SK-N-SH (cell line): ENCODE measurements at regions of chr6 and their contacts with region 1.

Region 1: GRCh38 chr6:38871741-38872568 is 156.8 kb downstream of the DNAH8 start:
- DNase-seq: peak; percentile 56
- H3K4me3 ChIP-seq: no peak overlapping the region
- H3K27ac ChIP-seq: no peak overlapping the region
- H3K4me1 ChIP-seq: no peaks in the 10 kb centered on the region; a peak in 1 of 4 replicates
- H3K27me3 ChIP-seq: no peaks in the 10 kb centered on the region
- CTCF ChIP-seq: peak; percentile 95
- EP300 ChIP-seq: no peak
- RAD21 ChIP-seq: peak; percentile 92

Region 2: DNA sequence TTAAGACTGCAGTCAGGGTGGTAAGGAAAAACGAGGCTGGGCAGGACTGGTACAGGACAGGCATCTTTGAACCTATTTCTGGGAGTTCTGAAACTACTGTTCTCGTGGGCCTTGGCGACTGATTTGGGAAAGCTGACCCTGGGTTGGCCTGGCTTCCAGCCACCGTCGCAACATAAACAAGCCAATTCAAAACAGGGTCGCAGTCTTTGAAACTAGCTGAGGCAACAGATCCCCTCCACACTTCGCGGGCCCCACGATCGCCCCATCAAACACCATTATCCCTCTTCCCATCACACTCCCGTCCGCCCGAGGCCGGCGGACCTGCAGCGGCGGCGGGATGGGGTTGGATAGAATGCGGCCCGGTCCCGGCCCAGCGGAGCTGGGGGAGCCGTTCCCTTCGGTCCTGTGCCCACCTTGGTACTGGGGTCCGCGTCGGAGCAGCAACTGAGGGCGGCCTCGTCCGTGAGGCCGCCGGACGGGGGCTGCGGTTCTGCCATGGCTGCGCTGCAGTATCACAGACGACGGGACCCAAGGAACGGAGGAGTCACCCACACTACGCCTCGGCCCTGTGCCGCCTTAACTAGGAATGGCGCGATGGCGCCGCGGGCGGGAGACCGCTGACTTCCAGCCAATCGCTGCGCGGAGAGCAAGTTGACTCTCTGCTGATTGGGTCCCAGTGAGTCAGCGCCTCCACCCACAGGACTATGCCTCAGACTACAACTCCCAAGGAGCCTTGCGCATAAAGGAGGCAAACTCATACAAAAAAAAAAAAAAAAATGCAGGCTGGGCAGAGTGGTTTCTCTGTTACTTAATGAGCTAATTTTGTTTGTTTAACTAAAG is 169.2 kb before region 1 on chr6 and contains the start of gene GLO1:
- CTCF ChIA-PET with region 1: no interaction called
- POLR2A ChIA-PET with region 1: no interaction called
- DNase-seq: peak; percentile 97
- H3K4me3 ChIP-seq: peak within 1 kb of the TSS; percentile 68 to 90
- H3K27ac ChIP-seq: peak within 1 kb of the TSS; percentile 70 to 86
- H3K4me1 ChIP-seq: peaks cover 0 to 2% of the 10 kb centered on the region in 2 experiments; a peak in 1 of 4 replicates
- H3K27me3 ChIP-seq: no peaks in the 10 kb centered on the region
- CTCF ChIP-seq: no peak
- EP300 ChIP-seq: no peak
- RAD21 ChIP-seq: no peak
- polyA plus RNA-seq, gene GLO1: 47.1 and 56.6 TPM in 2 replicates

Region 3: DNA sequence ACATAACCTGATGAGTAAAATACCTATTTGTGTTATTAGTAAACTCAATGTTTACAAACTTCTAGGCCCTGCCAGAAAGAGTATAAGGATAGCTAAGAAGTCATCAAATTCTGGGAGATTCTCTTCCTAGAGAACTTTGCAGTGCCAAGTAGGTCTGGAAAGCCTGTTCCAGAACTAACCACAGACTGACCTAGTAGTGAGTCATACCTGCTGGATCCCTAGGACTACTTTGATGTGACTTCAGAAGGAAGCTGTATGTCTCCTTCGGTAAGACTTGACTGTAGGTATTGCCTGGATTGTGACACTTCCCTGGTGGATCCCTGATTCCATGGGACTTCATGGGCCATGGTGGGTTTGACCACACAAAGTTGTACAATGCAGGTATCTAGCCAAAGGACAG is 25.1 kb before region 1 on chr6:
- CTCF ChIA-PET with region 1: interaction called, 12 read pairs
- POLR2A ChIA-PET with region 1: no interaction called
- DNase-seq: no peak
- H3K4me3 ChIP-seq: no peak overlapping the region
- H3K27ac ChIP-seq: no peak overlapping the region
- H3K4me1 ChIP-seq: no peaks in the 10 kb centered on the region
- H3K27me3 ChIP-seq: no peaks in the 10 kb centered on the region
- CTCF ChIP-seq: no peak
- EP300 ChIP-seq: no peak
- RAD21 ChIP-seq: no peak

Region 4: GRCh38 chr6:38909015-38909730 is 37.2 kb after region 1 on chr6:
- CTCF ChIA-PET with region 1: interaction called, 12 read pairs
- POLR2A ChIA-PET with region 1: no interaction called
- DNase-seq: no peak
- H3K4me3 ChIP-seq: no peak overlapping the region
- H3K27ac ChIP-seq: no peak overlapping the region
- H3K4me1 ChIP-seq: no peaks in the 10 kb centered on the region
- H3K27me3 ChIP-seq: no peaks in the 10 kb centered on the region
- CTCF ChIP-seq: no peak
- EP300 ChIP-seq: no peak
- RAD21 ChIP-seq: no peak

Region 5: GRCh38 chr6:38933432-38933831 is 61.5 kb after region 1 on chr6:
- CTCF ChIA-PET with region 1: interaction called, 29 read pairs
- POLR2A ChIA-PET with region 1: no interaction called
- DNase-seq: peak; percentile 27
- H3K4me3 ChIP-seq: no peak overlapping the region
- H3K27ac ChIP-seq: no peak overlapping the region
- H3K4me1 ChIP-seq: peaks cover 0 to 5% of the 10 kb centered on the region in 2 experiments; a peak in 2 of 4 replicates
- H3K27me3 ChIP-seq: no peaks in the 10 kb centered on the region; the same call in 1 of the 2 replicates
- CTCF ChIP-seq: peak; percentile 47
- EP300 ChIP-seq: no peak
- RAD21 ChIP-seq: peak; percentile 63

Region 6: DNA sequence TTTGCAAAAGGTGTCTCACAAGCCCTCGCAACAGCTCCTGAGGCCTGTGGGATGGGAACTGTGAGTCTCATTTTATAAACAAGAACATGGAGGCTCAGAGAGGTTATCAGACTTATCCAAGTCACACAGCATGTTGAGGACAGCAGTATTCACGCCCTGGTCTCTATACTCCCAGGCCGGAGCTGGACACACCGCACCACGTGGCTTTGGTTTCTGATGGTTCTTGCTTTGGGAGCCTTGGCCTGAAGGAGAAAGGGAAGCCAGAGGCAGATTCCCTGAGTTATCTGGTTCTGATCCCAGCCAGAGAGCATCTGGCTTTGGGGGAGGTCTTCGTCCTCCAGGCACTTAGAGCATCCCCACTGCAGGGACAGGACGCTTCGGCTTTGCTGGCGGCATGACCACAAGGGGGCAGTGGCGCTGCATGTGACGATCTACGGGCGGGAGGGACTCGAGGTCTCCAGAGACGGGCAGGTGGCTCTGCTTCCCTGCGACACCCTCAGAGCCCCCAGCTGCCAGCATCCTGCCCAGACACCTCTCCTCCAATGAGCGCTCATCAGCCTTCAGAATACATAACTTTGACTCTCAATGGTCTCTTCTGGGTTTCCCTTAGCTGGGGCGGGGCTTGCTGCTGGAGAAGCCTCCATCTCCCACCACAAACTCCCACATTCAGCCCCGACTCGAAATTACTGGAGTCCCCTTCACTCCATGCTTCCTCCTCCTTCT is 294.4 kb after region 1 on chr6:
- CTCF ChIA-PET with region 1: interaction called, 22 read pairs
- POLR2A ChIA-PET with region 1: no interaction called
- DNase-seq: peak; percentile 89
- H3K4me3 ChIP-seq: no peak overlapping the region; a peak in 1 of 4 replicates
- H3K27ac ChIP-seq: no peak overlapping the region
- H3K4me1 ChIP-seq: no peaks in the 10 kb centered on the region; a peak in 1 of 4 replicates
- H3K27me3 ChIP-seq: no peaks in the 10 kb centered on the region
- CTCF ChIP-seq: peak; percentile 70
- EP300 ChIP-seq: no peak
- RAD21 ChIP-seq: peak; percentile 92